Activated naive CD4-positive, alpha-beta T cell treated with anti-CD3 and anti-CD28 coated beads, Interleukin-2, amount 10 ng/mL, durations not matched to agents 7 days and 5 days (primary cell): ENCODE measurements at regions of chr3 and their contacts with region 1.

Region 1: GRCh38 chr3:133578548-133579191 is 5.2 kb downstream of the CDV3 start:
- DNase-seq: peak; percentile 24
- H3K4me3 Mint-ChIP-seq: peak overlapping the region; percentile 18
- H3K27ac Mint-ChIP-seq: peak overlapping the region; percentile 82
- H3K4me1 Mint-ChIP-seq: peaks cover 57% of the 10 kb centered on the region
- H3K27me3 Mint-ChIP-seq: no peaks in the 10 kb centered on the region

Region 2: DNA sequence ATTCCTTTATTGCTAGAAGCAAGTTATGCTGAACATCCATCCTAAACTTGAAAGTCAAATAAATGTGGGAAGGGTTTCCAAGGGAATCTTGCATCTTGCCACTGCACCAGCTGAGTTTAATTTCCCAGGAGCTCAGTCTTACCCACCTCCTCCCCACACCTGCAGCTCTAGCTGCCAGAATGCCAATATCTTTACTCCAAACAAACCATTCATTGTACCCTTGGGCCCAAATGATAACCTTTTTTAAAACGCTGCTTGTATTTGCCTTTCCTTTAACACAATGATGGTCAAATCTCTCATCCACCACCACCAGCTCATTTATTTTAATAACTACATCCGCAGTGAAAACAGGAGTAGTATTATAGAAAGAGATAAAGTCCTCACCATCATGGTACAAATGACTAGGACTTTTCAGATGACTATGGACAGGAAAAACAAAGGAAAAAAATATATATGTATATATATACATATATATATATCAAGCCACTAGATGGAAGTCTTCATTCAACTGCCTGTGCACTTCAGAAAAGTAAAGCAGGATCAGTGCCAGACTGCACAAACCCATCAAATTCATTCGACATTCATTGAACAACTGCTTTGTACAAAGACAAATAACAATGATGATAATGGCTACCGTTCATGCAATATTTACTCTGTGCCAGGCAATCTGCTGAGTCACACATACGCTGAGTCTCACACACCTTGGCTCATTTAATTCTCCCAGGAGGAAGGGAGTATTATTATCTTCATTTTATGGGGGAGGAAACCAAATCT is 134.8 kb before region 1 on chr3:
- CTCF ChIA-PET with region 1: interaction called, 13 read pairs
- DNase-seq: no peak
- H3K4me3 Mint-ChIP-seq: no peak overlapping the region
- H3K27ac Mint-ChIP-seq: peak overlapping the region; percentile 11
- H3K4me1 Mint-ChIP-seq: peaks cover 46% of the 10 kb centered on the region
- H3K27me3 Mint-ChIP-seq: no peaks in the 10 kb centered on the region

Region 3: GRCh38 chr3:133531981-133532380 is 46.7 kb before region 1 on chr3:
- CTCF ChIA-PET with region 1: no interaction called
- DNase-seq: no peak
- H3K4me3 Mint-ChIP-seq: no peak overlapping the region
- H3K27ac Mint-ChIP-seq: no peak overlapping the region
- H3K4me1 Mint-ChIP-seq: no peaks in the 10 kb centered on the region
- H3K27me3 Mint-ChIP-seq: peaks cover 14% of the 10 kb centered on the region

Region 4: DNA sequence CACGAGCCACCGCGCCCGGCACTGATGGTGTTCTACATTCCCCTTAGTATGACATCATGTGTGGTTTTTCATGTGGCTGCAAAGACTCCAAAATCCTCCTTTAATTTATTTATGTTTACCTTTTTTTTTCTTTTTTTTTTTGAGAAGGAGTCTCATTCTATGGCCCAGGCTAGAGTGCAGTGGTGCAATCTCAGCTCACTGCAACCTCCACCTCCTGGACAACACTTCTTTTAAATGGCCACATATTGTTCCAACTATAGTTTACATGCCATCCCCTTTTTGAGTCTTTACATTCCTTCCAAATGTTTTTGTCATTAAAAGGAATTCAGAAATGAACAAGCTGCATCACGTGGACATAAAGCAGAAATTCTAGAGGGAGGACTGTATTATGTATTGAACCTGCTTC is 15.5 kb before region 1 on chr3:
- CTCF ChIA-PET with region 1: no interaction called
- DNase-seq: no peak
- H3K4me3 Mint-ChIP-seq: no peak overlapping the region
- H3K27ac Mint-ChIP-seq: no peak overlapping the region
- H3K4me1 Mint-ChIP-seq: no peaks in the 10 kb centered on the region
- H3K27me3 Mint-ChIP-seq: peaks cover 17% of the 10 kb centered on the region